Sigmoid colon (tissue), 7 donors: ENCODE measurements at regions of chr6 and their contacts with region 1.

Region 1: GRCh38 chr6:11575408-11576033 is 38.0 kb downstream of the TMEM170B start:
- DNase-seq: peak; percentile 77
- H3K4me3 ChIP-seq: no peak overlapping the region
- H3K27ac ChIP-seq: no peak overlapping the region
- H3K4me1 ChIP-seq: no peaks in the 10 kb centered on the region
- H3K27me3 ChIP-seq: no peaks in the 10 kb centered on the region
- CTCF ChIP-seq: peak; percentile 62 to 85 (median 76)
- EP300 ChIP-seq: no peak
- POLR2A ChIP-seq: no peak

Region 2: DNA sequence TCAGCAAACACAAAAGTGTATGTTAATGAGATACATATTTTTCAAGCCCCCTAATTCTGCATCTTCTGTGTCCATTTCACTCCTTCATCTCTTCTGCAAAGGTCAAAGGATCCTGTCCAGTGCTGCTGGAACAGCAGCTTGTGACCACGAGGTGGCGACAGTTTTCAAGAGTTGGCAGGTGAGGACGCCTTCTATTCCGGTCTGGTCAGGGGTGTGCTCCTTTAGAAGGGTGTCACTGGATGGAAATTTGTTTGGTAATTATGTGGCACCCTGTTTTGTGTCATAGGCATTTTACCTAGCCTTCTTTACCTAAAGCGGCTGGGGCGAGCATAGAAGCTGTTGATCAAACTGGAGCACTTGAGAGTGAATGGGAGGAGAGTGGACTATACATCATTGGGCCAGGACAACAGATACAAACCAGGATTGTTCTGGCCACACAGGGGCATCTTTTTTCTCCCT is 431.1 kb before region 1 on chr6:
- intact Hi-C with region 1: loop called (anchors 10 kb)
- DNase-seq: peak; percentile 85
- H3K4me3 ChIP-seq: no peak overlapping the region
- H3K27ac ChIP-seq: no peak overlapping the region
- H3K4me1 ChIP-seq: peaks cover 0 to 5% (median 0%) of the 10 kb centered on the region in 4 donors
- H3K27me3 ChIP-seq: no peaks in the 10 kb centered on the region
- CTCF ChIP-seq: peak; percentile 79 to 91 (median 84)
- EP300 ChIP-seq: no peak
- POLR2A ChIP-seq: no peak